Right ventricle myocardium superior (tissue), 1 donor: ENCODE measurements at regions of chr4 and their contacts with region 1.

Region 1: DNA sequence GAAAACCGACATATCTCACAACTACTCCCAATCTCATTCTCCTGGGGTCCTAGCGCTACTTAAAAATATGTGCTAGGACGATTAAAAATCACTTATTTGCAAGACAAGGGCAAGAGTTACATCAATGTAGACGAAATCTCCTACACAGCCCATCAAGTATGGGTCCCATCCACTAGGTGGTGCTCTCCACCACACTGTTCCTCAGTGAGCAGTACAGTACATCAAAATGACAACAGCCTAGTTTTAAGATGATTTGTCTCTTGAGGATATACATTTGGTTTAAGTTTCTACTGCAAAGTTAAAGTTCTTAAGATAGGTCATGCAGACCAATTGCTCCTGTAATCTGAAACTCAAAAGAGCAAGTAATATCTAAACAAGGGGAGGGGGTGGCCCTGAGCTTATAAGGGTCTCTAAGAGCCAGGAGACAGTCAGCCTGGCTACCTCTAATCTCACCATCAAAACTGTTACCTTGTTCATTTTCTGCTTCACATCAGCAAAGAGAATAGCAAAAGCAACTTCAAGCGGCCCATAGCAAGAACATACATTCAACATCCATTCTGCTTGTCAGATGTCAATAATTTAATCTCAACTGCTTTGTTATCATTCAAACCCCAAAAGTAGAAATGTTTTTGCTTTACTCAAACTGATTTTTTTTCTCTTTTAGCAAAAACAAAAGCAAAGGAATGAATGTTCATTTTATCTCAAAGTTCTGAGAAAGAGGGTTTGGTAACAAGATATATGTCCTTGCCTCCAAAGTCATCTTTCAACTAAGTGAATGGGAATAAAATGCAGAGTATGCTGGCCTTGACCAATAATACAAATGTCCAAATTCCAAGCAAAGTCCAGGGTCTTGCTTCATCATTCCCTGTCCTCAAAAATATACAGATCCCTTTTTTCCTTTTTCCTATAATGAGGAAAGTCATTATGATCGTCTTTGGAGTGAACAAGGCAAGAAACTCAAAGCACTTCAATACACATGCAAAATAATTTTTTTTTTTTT is 53.1 kb downstream of the STX18 start:
- DNase-seq: peak; percentile 56
- ATAC-seq: peak; percentile 93

Region 2: GRCh38 chr4:4344915-4345527 is 143.7 kb before region 1 on chr4:
- intact Hi-C with region 1: no loop called
- DNase-seq: no peak
- ATAC-seq: no peak

Region 3: GRCh38 chr4:4880492-4880891 is 391.8 kb after region 1 on chr4:
- intact Hi-C with region 1: loop called (anchors 5 kb)
- DNase-seq: no peak
- ATAC-seq: no peak